Endothelial cell of umbilical vein (primary cell): ENCODE measurements at regions of chr11 and their contacts with region 1.

Region 1: GRCh38 chr11:88709567-88709966 is 356.2 kb downstream of the GRM5 start:
- DNase-seq: peak; percentile 15
- H3K4me3 ChIP-seq: no peak overlapping the region
- H3K27ac ChIP-seq: no peak overlapping the region
- H3K4me1 ChIP-seq: no peaks in the 10 kb centered on the region
- H3K27me3 ChIP-seq: no peaks in the 10 kb centered on the region
- CTCF ChIP-seq: no peak
- POLR2A ChIP-seq: no peak

Region 2: DNA sequence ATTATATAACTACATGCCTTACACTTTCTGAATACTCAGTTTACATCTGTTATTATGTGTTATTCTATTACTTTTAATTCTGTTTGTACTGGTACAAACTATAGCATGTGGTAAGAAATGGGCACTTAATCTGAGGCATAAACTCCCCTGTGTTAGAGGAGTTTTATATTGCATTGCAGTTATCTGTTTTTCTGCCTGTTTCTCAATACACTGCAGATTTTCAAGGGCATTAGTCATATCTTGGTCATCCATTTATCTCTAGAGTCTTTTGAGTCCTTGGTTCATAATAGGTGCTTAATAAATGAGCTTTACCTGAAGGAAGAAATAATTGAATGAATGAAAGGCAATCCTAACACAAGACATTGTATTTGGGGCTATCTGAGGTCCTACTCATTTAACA is 189.2 kb before region 1 on chr11:
- CTCF ChIA-PET with region 1: no interaction called
- POLR2A ChIA-PET with region 1: no interaction called
- dilution Hi-C with region 1: no loop called
- intact Hi-C with region 1: no loop called
- DNase-seq: no peak
- H3K4me3 ChIP-seq: no peak overlapping the region
- H3K27ac ChIP-seq: no peak overlapping the region
- H3K4me1 ChIP-seq: peaks cover 8% of the 10 kb centered on the region
- H3K27me3 ChIP-seq: no peaks in the 10 kb centered on the region
- CTCF ChIP-seq: no peak
- POLR2A ChIP-seq: no peak

Region 3: DNA sequence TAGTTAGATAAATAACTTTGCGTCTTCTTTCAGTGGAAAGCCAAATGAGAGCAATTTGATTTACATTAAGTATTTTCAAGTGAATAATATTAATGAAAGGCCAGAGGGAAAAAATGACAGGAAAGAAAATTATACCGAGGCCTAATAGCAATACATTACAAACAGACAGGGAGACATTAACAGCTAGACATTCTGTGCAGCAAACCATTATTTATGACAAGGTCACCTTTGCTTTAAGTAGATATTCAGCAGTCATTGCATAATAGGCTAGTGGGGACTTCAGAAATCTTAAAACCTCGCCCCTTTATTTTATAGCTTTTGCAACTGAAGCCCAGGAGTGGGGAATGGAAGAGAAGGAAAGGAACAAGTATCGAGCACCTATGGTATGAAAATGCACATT is 34.6 kb after region 1 on chr11:
- CTCF ChIA-PET with region 1: no interaction called
- POLR2A ChIA-PET with region 1: no interaction called
- dilution Hi-C with region 1: no loop called
- intact Hi-C with region 1: loop called (anchors 2 kb)
- DNase-seq: no peak
- H3K4me3 ChIP-seq: no peak overlapping the region
- H3K27ac ChIP-seq: no peak overlapping the region
- H3K4me1 ChIP-seq: no peaks in the 10 kb centered on the region
- H3K27me3 ChIP-seq: no peaks in the 10 kb centered on the region
- CTCF ChIP-seq: no peak
- POLR2A ChIP-seq: no peak